RWPE1 (cell line): ENCODE measurements at regions of chr13 and their contacts with region 1.

Region 1: GRCh38 chr13:83281654-83282053 is 600.6 kb downstream of the SLITRK1 start:
- DNase-seq: no peak
- H3K27ac ChIP-seq: no peak overlapping the region
- CTCF ChIP-seq: no peak

Region 2: GRCh38 chr13:83515268-83516015 is 233.8 kb after region 1 on chr13:
- CTCF ChIA-PET with region 1: interaction called, 10 read pairs
- POLR2A ChIA-PET with region 1: no interaction called
- DNase-seq: peak; percentile 23
- H3K27ac ChIP-seq: no peak overlapping the region
- CTCF ChIP-seq: no peak